ENCODE measurements at regions of chr17 and their contacts with region 1.

Region 1: GRCh38 chr17:39927101-39927928 is at the starts of genes LRRC3C and ORMDL3:
- DNase-seq: peak; percentile 94
- ATAC-seq: peak; percentile 71
- H3K4me3 ChIP-seq: peak within 1 kb of the TSS; percentile 72 to 96 (median 90)
- H3K27ac ChIP-seq: peak within 1 kb of the TSS; percentile 93
- H3K4me1 ChIP-seq: peaks cover 65% of the 10 kb centered on the region
- H3K27me3 ChIP-seq: no peaks in the 10 kb centered on the region; a peak in 1 of 5 replicates
- CTCF ChIP-seq: no peak; the same call in 1 of the 2 replicates
- EP300 ChIP-seq: peak in 1 of 2 experiments; percentile 37; a peak in 1 of 4 replicates
- POLR2A ChIP-seq: peak; percentile 46 to 86
- RAD21 ChIP-seq: peak; percentile 57; the same call in 1 of the 2 replicates
- total RNA-seq, gene LRRC3C: not detected in 2 replicates
- total RNA-seq, gene ORMDL3: 125 and 181 TPM in 2 replicates

Region 2: GRCh38 chr17:38824899-38825761 is 1102.2 kb before region 1 on chr17 and contains the start of gene CWC25:
- CTCF ChIA-PET with region 1: no interaction called
- POLR2A ChIA-PET with region 1: no interaction called
- in situ Hi-C with region 1: no loop called
- intact Hi-C with region 1: no loop called
- DNase-seq: peak; percentile 93
- ATAC-seq: peak; percentile 84
- H3K4me3 ChIP-seq: peak within 1 kb of the TSS; percentile 91 to 100 (median 93)
- H3K27ac ChIP-seq: peak within 1 kb of the TSS; percentile 98
- H3K4me1 ChIP-seq: peaks cover 21% of the 10 kb centered on the region
- H3K27me3 ChIP-seq: peaks cover 0 to 4% of the 10 kb centered on the region in 2 experiments; a peak in 1 of 5 replicates
- CTCF ChIP-seq: no peak; the same call in 1 of the 2 replicates
- EP300 ChIP-seq: peak; percentile 68 to 96; a peak in 3 of 4 replicates
- POLR2A ChIP-seq: peak; percentile 97 to 98
- RAD21 ChIP-seq: peak; percentile 70
- total RNA-seq, gene CWC25: 12.7 and 15.6 TPM in 2 replicates

Region 3: DNA sequence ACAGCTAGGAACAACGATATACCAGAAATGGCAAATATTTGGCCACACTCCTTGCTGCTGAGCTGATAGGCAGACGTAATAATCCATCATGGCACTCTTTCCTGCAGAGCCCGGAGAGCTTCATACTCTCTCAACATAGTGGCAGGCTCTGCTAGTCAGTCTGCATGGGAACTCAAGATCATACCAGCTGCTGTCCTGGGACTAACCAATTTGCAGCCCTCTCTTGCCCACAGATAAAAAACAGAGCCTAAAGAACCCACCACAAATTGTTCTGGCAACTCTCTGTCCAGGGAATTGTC is 22.4 kb before region 1 on chr17:
- CTCF ChIA-PET with region 1: no interaction called
- POLR2A ChIA-PET with region 1: interaction called, 47 read pairs
- in situ Hi-C with region 1: no loop called
- intact Hi-C with region 1: no loop called
- DNase-seq: no peak
- ATAC-seq: peak; percentile 84
- H3K4me3 ChIP-seq: peak overlapping the region in 1 of 3 experiments; percentile 45; a peak in 1 of 6 replicates
- H3K27ac ChIP-seq: peak overlapping the region; percentile 73
- H3K4me1 ChIP-seq: peaks cover 24% of the 10 kb centered on the region
- H3K27me3 ChIP-seq: no peaks in the 10 kb centered on the region
- CTCF ChIP-seq: no peak
- EP300 ChIP-seq: no peak
- POLR2A ChIP-seq: no peak
- RAD21 ChIP-seq: no peak

Region 4: DNA sequence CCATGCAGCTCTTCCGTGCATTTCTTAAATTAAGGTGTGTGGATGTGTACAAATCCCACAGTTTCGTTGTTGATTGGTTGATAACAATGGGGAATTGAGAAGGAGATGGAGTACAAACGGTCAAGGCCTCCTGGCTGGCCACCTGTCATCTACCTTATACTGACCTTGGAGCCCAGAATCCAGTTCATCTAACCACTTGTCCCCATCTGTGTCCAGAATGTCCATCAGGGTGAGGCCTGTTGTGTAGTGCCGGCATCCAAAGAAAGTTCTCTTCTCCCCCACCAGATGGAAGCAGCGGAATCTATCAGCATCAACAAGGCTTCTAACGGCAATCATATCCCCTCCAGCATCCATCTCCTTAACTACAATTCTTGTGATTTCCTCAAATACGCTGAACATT is 10.4 kb before region 1 on chr17:
- CTCF ChIA-PET with region 1: no interaction called
- POLR2A ChIA-PET with region 1: interaction called, 12 read pairs
- in situ Hi-C with region 1: no loop called
- intact Hi-C with region 1: no loop called
- DNase-seq: peak; percentile 77
- ATAC-seq: peak; percentile 81
- H3K4me3 ChIP-seq: no peak overlapping the region; a peak in 1 of 6 replicates
- H3K27ac ChIP-seq: peak overlapping the region; percentile 30
- H3K4me1 ChIP-seq: peaks cover 82% of the 10 kb centered on the region
- H3K27me3 ChIP-seq: no peaks in the 10 kb centered on the region
- CTCF ChIP-seq: peak; percentile 87
- EP300 ChIP-seq: no peak
- POLR2A ChIP-seq: no peak
- RAD21 ChIP-seq: peak; percentile 64; the same call in 1 of the 2 replicates

Region 5: GRCh38 chr17:39939588-39940419 is 12.5 kb after region 1 on chr17:
- CTCF ChIA-PET with region 1: no interaction called
- POLR2A ChIA-PET with region 1: interaction called, 15 read pairs
- in situ Hi-C with region 1: no loop called
- intact Hi-C with region 1: loop called (anchors 1 kb)
- DNase-seq: no peak
- ATAC-seq: peak; percentile 56
- H3K4me3 ChIP-seq: no peak overlapping the region
- H3K27ac ChIP-seq: no peak overlapping the region
- H3K4me1 ChIP-seq: peaks cover 52% of the 10 kb centered on the region
- H3K27me3 ChIP-seq: peaks cover 13 to 19% of the 10 kb centered on the region in 2 experiments; a peak in 3 of 5 replicates
- CTCF ChIP-seq: peak; percentile 57
- EP300 ChIP-seq: no peak
- POLR2A ChIP-seq: no peak
- RAD21 ChIP-seq: peak; percentile 40; the same call in 1 of the 2 replicates

Region 6: DNA sequence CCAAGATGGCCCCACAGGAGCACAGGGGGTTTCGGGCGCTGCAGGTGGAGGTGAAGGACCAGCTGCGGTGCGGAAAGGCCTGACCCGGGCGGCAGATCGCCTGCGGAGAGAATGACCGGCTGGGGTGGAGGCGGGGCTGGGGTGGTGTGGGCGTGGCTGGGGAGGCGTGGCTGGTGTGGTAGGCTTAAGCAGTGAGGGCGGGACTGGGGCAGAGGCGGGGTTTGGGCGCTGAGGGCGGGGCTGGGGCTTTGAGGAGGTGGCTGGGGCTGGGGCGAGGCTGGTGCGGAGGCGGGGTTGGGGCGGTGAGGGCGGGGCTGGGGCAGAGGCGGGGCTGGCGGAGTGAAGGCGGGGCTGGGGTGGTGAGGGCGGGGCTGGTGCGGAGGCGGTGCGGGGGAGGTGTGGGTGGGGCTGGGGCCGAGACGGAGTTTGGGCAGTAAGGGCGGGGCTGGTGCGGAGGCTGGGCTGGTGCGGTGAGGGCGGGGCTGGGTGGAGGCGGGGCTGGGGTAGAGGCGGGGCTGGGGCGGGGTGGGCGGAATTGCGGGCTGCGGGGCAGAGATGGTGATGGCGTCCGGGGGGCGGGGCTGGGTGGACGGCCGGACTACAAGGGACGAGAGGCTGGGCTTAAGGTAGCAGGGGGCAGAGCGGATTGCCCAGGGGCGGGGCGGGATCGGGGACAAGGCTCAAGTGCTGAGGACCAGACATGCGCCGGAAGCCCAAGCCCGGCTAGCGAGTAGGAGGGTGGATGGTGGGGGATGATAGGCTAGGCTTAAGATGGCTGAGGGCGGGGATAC is 25.6 kb after region 1 on chr17:
- CTCF ChIA-PET with region 1: no interaction called
- POLR2A ChIA-PET with region 1: interaction called, 16 read pairs
- in situ Hi-C with region 1: no loop called
- intact Hi-C with region 1: no loop called
- DNase-seq: peak; percentile 94
- ATAC-seq: peak; percentile 92
- H3K4me3 ChIP-seq: peak overlapping the region; percentile 48 to 79 (median 51)
- H3K27ac ChIP-seq: no peak overlapping the region
- H3K4me1 ChIP-seq: peaks cover 64% of the 10 kb centered on the region
- H3K27me3 ChIP-seq: peaks cover under 1 to 11% of the 10 kb centered on the region in 2 experiments; a peak in 3 of 5 replicates
- CTCF ChIP-seq: no peak
- EP300 ChIP-seq: no peak
- POLR2A ChIP-seq: peak in 1 of 2 experiments; percentile 77; a peak in 2 of 4 replicates
- RAD21 ChIP-seq: no peak

Region 7: GRCh38 chr17:39972271-39972670 is 45.0 kb after region 1 on chr17:
- CTCF ChIA-PET with region 1: no interaction called
- POLR2A ChIA-PET with region 1: no interaction called
- in situ Hi-C with region 1: loop called (anchors 5 kb)
- intact Hi-C with region 1: no loop called
- DNase-seq: no peak
- ATAC-seq: no peak
- H3K4me3 ChIP-seq: no peak overlapping the region
- H3K27ac ChIP-seq: no peak overlapping the region
- H3K4me1 ChIP-seq: no peaks in the 10 kb centered on the region
- H3K27me3 ChIP-seq: peaks cover 9 to 58% of the 10 kb centered on the region in 2 experiments
- CTCF ChIP-seq: no peak
- EP300 ChIP-seq: no peak
- POLR2A ChIP-seq: no peak
- RAD21 ChIP-seq: no peak

Region 8: GRCh38 chr17:39980351-39981206 is 53.3 kb after region 1 on chr17 and contains the start of gene PSMD3:
- CTCF ChIA-PET with region 1: no interaction called
- POLR2A ChIA-PET with region 1: interaction called, 16 read pairs
- in situ Hi-C with region 1: no loop called
- intact Hi-C with region 1: loop called (anchors 2 kb)
- DNase-seq: peak; percentile 100
- ATAC-seq: peak; percentile 92
- H3K4me3 ChIP-seq: peak within 1 kb of the TSS; percentile 92 to 96 (median 94)
- H3K27ac ChIP-seq: peak within 1 kb of the TSS; percentile 82
- H3K4me1 ChIP-seq: peaks cover 25% of the 10 kb centered on the region
- H3K27me3 ChIP-seq: peaks cover 6 to 28% of the 10 kb centered on the region in 2 experiments
- CTCF ChIP-seq: peak; percentile 96
- EP300 ChIP-seq: peak; percentile 61 to 70; a peak in 2 of 4 replicates
- POLR2A ChIP-seq: peak; percentile 86 to 92
- RAD21 ChIP-seq: peak; percentile 97
- total RNA-seq, gene PSMD3: 114 and 146 TPM in 2 replicates

Region 9: DNA sequence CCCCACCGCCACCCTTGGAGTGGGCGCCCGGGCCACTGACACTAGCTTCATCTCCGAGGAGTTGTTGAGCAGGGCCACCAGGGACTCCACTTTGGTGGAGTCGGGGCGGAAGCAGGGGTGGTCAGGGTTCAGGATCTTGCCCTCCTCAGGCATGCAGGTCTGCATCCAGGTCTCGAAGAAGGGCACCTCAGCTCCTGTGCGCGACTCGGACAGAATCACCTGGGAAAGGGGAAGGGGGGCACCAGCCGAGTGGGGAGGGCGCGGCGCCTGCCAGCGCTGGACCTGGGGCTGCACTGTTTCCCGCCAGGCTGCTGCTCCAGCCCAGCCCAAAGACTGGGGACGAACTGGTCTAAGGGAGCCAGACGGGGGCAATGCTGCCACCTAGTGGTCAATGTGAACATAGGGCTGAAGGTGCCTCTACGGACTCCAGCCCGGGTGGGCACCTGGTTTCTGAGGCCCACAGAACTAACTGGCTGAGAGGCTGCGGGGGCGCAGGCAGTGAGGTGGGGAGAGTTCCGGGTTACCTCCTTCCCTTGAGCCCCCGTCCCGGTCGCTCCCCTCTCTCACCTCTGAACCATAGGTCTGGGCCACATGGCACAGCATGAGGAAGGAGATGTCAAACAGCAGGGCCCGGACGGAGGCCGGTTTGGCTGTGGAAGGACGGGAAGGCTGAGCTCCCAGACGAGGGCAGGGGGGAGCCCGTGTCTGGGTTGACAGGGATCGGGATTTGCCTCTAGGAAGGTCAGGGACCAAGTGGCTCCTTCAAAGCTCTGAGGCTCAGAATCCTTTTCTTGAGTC is 99.7 kb after region 1 on chr17:
- CTCF ChIA-PET with region 1: no interaction called
- POLR2A ChIA-PET with region 1: no interaction called
- in situ Hi-C with region 1: no loop called
- intact Hi-C with region 1: no loop called
- DNase-seq: peak; percentile 82
- ATAC-seq: peak; percentile 97
- H3K4me3 ChIP-seq: no peak overlapping the region
- H3K27ac ChIP-seq: no peak overlapping the region
- H3K4me1 ChIP-seq: no peaks in the 10 kb centered on the region
- H3K27me3 ChIP-seq: no peaks in the 10 kb centered on the region
- CTCF ChIP-seq: peak; percentile 98
- EP300 ChIP-seq: no peak
- POLR2A ChIP-seq: no peak
- RAD21 ChIP-seq: peak; percentile 77

Measured in HepG2 (cell line).